ENCODE measurements at regions of chr3 and their contacts with region 1.

Region 1: DNA sequence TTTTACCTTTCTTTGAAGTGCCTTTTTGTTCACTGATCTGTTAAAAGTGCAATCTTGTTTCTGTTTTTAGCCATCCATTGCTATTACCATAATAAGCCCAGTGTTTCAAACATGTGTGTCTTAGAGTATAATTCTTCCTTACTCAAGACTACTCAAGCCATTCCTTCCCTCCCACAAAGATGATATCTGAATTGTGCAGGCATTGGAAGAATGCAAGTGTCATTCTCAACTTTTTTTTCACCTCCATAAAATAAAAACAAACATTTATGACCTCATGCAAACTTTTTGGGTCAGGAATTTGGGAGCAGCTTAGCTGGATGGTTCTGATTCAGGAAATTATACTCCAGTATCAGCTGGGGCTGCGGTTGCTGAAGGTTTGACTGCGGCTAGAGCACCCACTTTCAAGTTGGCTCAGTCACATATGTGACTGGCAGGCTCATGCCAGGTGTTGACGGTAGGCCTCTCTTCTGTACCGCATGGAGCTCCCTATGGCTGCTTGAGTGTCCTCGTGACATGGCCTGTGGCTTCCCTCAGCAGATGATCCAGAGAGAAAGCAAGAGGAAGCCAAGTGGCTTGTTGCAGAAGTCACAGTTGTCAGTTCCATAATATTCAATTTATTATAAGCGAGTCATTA is 490.8 kb downstream of the CNTN4 start:
- DNase-seq: no peak
- H3K4me3 ChIP-seq: no peak overlapping the region
- H3K4me3 Mint-ChIP-seq: no peak overlapping the region
- H3K27ac ChIP-seq: no peak overlapping the region
- H3K27ac Mint-ChIP-seq: no peak overlapping the region
- H3K4me1 ChIP-seq: no peaks in the 10 kb centered on the region
- H3K4me1 Mint-ChIP-seq: no peaks in the 10 kb centered on the region
- H3K27me3 ChIP-seq: no peaks in the 10 kb centered on the region
- H3K27me3 Mint-ChIP-seq: no peaks in the 10 kb centered on the region

Region 2: GRCh38 chr3:3038201-3038991 is 448.9 kb after region 1 on chr3:
- CTCF ChIA-PET with region 1: no interaction called
- POLR2A ChIA-PET with region 1: no interaction called
- DNase-seq: no peak
- H3K4me3 ChIP-seq: no peak overlapping the region
- H3K4me3 Mint-ChIP-seq: no peak overlapping the region
- H3K27ac ChIP-seq: no peak overlapping the region
- H3K27ac Mint-ChIP-seq: no peak overlapping the region
- H3K4me1 ChIP-seq: no peaks in the 10 kb centered on the region
- H3K4me1 Mint-ChIP-seq: no peaks in the 10 kb centered on the region
- H3K27me3 ChIP-seq: no peaks in the 10 kb centered on the region
- H3K27me3 Mint-ChIP-seq: peaks cover 10 to 34% of the 10 kb centered on the region in 2 donors

Region 3: DNA sequence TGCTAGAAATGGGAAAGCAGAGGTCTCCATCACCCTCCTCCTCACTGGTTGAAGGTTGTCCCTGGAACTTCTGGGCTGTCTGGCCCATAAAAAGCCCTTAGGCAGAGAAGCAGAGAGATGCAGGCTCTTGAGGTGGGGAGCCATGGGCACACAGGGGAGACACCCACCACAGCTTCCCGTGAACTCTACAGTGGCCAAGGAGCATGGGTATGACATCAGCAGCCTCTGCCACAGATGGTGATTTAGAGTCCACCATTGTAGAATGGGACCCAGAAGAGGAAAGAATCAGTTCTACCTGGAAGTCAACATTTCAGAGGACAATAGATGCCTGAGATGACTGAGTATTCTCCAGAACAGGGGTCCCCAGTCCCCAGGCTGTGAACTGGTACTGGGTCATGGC is 1104.1 kb after region 1 on chr3:
- CTCF ChIA-PET with region 1: no interaction called
- POLR2A ChIA-PET with region 1: interaction called, 13 read pairs
- DNase-seq: no peak
- H3K4me3 ChIP-seq: no peak overlapping the region
- H3K4me3 Mint-ChIP-seq: no peak overlapping the region
- H3K27ac ChIP-seq: no peak overlapping the region
- H3K27ac Mint-ChIP-seq: no peak overlapping the region
- H3K4me1 ChIP-seq: no peaks in the 10 kb centered on the region
- H3K4me1 Mint-ChIP-seq: no peaks in the 10 kb centered on the region
- H3K27me3 ChIP-seq: no peaks in the 10 kb centered on the region
- H3K27me3 Mint-ChIP-seq: peaks cover 0 to 3% of the 10 kb centered on the region in 2 donors

Measured in CD8-positive, alpha-beta memory T cell (primary cell).